ENCODE measurements at regions of chr4 and their contacts with region 1.

Region 1: GRCh38 chr4:77777135-77777807 is 41.9 kb downstream of the CNOT6L start:
- DNase-seq: no peak
- ATAC-seq: no peak
- H3K4me3 ChIP-seq: no peak overlapping the region
- H3K4me3 Mint-ChIP-seq: no peak overlapping the region
- H3K27ac ChIP-seq: peak overlapping the region in 1 of 2 experiments; percentile 27
- H3K27ac Mint-ChIP-seq: peak overlapping the region; percentile 5
- H3K4me1 ChIP-seq: peaks cover 52% of the 10 kb centered on the region
- H3K4me1 Mint-ChIP-seq: peaks cover 70% of the 10 kb centered on the region
- H3K27me3 ChIP-seq: no peaks in the 10 kb centered on the region
- H3K27me3 Mint-ChIP-seq: no peaks in the 10 kb centered on the region
- CTCF ChIP-seq: no peak

Region 2: DNA sequence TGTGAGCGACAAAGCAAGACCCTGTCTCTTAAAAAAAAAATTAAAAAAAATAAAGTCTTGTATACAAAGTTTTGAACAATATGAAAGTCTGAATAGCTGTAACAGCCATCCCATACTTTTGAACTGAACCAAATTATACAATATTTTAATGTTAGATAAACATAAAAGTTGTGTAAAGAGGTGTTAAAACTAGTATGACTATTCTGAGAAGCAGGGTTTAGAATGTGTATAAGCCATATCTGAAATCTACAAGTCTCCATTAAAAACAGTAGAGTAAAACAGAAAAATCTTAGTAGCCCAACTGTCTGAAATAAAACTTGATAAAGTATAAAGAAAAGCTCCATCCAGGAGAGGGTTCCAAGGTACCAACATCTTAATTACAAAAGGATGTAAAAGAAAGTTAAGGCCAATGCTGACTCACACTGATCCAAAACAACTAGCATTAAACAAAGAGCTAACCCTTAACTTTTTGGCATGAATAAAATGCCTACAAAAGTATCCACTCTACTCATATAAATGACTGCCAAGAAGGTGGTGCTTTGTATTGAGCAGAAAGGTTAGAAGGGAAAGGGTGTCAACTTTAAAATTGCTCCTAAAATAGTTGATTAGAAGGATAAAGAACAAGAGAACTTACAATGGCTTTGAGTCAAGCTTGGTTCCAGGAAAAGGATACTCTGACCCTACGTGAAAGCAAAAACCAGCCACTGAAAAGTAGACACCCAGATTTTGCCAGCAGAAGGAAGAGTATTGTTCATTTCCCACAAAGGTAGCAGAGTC is 23.4 kb after region 1 on chr4:
- CTCF ChIA-PET with region 1: interaction called, 3 read pairs
- POLR2A ChIA-PET with region 1: no interaction called
- intact Hi-C with region 1: loop called in 1 of 2 experiments (anchors 2 kb)
- DNase-seq: no peak
- ATAC-seq: peak; percentile 10
- H3K4me3 ChIP-seq: peak overlapping the region; percentile 6 to 19
- H3K4me3 Mint-ChIP-seq: peak overlapping the region; percentile 72
- H3K27ac ChIP-seq: peak overlapping the region; percentile 2 to 71
- H3K27ac Mint-ChIP-seq: peak overlapping the region; percentile 78
- H3K4me1 ChIP-seq: peaks cover 73% of the 10 kb centered on the region
- H3K4me1 Mint-ChIP-seq: peaks cover 82% of the 10 kb centered on the region
- H3K27me3 ChIP-seq: no peaks in the 10 kb centered on the region
- H3K27me3 Mint-ChIP-seq: no peaks in the 10 kb centered on the region
- CTCF ChIP-seq: no peak

Region 3: DNA sequence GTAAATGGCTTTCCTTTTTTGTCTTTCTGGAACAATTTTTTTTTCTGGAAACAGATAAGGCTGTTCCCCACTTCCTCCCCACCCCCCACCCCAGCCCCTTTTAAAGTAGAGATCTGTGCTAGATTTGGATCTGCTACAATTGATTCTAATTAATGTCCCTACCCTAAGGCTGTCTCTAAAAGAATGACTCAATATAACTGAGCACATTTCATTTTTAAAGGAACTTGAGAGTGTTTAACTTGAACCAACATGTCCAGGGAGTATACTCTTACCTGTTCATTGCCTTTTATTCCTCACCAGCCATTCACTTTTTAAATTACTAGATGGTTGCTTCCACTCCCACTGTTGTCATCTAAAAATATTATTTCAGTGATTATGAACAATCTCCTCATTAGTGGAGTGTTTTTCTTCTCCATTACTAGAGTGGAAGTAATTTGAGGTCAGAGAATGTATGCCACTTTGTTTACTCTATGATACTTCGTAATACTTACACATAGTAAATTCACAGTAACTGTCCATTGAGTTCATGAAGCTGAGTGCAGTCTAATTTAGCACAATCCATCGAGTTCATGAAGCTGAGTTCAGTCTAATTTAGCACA is 56.0 kb after region 1 on chr4:
- CTCF ChIA-PET with region 1: no interaction called
- POLR2A ChIA-PET with region 1: no interaction called
- intact Hi-C with region 1: no loop called
- DNase-seq: no peak
- ATAC-seq: no peak
- H3K4me3 ChIP-seq: no peak overlapping the region
- H3K4me3 Mint-ChIP-seq: no peak overlapping the region
- H3K27ac ChIP-seq: no peak overlapping the region
- H3K27ac Mint-ChIP-seq: no peak overlapping the region
- H3K4me1 ChIP-seq: peaks cover 5% of the 10 kb centered on the region
- H3K4me1 Mint-ChIP-seq: peaks cover 18% of the 10 kb centered on the region
- H3K27me3 ChIP-seq: no peaks in the 10 kb centered on the region
- H3K27me3 Mint-ChIP-seq: no peaks in the 10 kb centered on the region
- CTCF ChIP-seq: no peak

Region 4: DNA sequence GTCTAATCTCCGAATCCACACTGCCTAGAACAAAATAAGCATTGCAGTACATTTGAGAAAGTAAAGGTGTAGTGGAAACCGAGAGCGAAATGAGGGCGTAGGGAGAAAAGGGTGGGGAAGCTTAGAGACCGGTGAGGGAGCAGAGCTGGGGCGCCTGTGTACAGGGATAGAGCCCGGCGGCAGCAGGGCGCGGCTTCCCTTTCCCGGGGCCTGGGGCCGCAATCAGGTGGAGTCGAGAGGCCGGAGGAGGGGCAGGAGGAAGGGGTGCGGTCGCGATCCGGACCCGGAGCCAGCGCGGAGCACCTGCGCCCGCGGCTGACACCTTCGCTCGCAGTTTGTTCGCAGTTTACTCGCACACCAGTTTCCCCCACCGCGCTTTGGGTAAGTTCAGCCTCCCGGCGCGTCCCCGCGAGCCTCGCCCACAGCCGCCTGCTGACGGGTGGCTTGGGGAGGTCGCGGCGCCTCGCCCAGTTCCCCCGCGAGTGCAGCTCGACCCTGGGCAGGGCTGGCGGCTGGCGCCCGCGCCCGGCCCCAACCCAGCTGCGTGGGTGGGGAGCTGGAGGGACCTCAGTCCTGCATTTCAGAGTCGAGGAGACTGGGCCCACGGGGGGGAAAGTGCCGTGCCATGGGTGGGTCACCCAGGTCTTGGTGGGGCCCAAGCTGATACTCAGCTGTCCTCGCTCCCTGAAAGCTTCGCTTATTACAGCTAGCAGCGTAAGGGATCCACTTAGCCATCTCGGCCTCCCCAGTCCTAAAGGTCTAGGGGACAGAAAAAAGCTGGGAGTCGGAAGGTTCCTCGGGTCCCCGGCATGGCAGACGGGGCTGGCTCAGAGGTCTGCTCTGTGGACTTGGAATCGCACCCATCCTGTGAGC is 774.4 kb after region 1 on chr4 and contains the start of gene ANXA3:
- CTCF ChIA-PET with region 1: no interaction called
- POLR2A ChIA-PET with region 1: no interaction called
- intact Hi-C with region 1: no loop called
- DNase-seq: peak in 1 of 9 experiments; percentile 2
- ATAC-seq: no peak
- H3K4me3 ChIP-seq: peak within 1 kb of the TSS in 1 of 2 experiments; percentile 33
- H3K4me3 Mint-ChIP-seq: peak within 1 kb of the TSS; percentile 68
- H3K27ac ChIP-seq: no peak within 1 kb of the TSS
- H3K27ac Mint-ChIP-seq: no peak within 1 kb of the TSS
- H3K4me1 ChIP-seq: peaks cover 5% of the 10 kb centered on the region
- H3K4me1 Mint-ChIP-seq: peaks cover 5% of the 10 kb centered on the region
- H3K27me3 ChIP-seq: peaks cover 6% of the 10 kb centered on the region in 2 experiments
- H3K27me3 Mint-ChIP-seq: peaks cover 32% of the 10 kb centered on the region
- CTCF ChIP-seq: no peak
- total RNA-seq, gene ANXA3: not detected

Measured in CD8-positive, alpha-beta T cell (primary cell).